ENCODE measurements at regions of chr2 and their contacts with region 1.

Region 1: DNA sequence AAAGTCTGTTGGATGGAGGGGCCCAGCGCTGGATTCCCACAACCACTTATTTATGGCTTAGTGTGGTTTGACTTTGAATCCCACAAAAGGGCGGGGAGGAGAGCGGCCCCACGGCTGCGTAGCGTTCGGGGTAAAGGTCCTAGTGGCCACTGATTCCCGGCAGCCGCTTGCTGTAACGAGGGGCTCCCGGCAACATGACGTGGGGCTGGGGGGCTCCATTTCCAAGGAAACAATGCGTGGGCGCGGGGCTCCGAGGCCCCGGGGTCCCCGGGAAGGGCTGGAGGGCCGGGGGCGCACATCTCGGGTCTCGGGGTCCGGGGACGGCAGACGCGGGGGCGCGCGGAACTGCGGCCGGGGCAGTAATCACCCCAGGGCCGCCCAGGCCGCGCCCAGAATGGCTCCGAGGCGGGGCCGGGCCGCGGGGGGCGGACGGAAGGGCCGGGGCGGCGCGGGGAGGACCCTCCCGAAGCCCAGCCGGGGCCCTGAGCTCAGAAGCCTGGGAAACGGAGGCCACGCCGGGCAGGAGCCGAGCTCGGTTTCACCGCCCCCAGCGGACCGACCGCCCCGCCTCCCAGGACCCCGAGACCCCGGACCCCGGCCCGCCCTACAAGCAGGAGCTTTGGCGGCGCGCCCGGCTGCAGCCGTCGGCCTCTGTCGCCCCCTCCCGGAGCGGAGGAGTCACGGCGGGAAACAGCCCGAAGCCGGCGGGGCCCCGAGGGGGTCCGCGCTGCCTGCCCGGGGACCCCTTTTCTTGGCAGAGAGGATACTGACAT is 11.9 kb upstream of the MLPH start:
- DNase-seq: peak; percentile 67 to 84 (median 78)
- H3K4me3 ChIP-seq: peak overlapping the region in 3 of 4 donors; percentile 13 to 95 (median 93)
- H3K27ac ChIP-seq: peak overlapping the region in 4 of 5 donors; percentile 42 to 87 (median 72)
- H3K4me1 ChIP-seq: peaks cover 9 to 10% of the 10 kb centered on the region in 2 donors
- H3K27me3 ChIP-seq: no peaks in the 10 kb centered on the region
- CTCF ChIP-seq: peak; percentile 51 to 90 (median 73)
- POLR2A ChIP-seq: peak in 1 of 2 donors; percentile 15

Region 2: DNA sequence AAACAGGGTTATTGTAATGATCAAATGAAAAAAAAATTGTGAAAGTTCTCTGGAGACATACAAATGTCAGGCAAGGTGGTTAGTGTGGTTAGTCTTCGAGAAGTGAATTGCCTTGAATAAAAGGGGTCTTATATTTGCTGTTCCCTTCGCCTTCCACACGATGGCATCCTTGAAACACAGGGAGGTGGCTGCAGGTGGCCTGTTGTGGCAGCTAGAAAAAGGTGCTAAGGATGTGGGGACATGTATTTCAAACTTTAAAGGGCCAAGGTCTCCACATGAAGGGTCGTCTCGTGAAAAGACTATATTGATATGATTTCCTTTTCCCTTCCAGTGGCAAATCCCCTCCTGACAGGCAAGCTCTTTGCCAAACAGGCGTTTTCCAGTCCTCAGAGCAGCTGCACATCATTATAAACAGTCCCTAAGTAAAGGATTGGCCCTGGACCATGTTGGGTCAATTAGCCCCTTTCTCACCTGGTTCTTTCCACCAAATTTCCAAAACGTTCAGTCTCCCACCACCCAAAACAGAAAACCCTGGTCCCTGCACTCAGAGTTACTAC is 321.0 kb before region 1 on chr2:
- intact Hi-C with region 1: loop called in 1 of 2 experiments (anchors 10 kb)
- DNase-seq: peak in 5 of 7 donors; percentile 39 to 67 (median 48)
- H3K4me3 ChIP-seq: no peak overlapping the region
- H3K27ac ChIP-seq: no peak overlapping the region
- H3K4me1 ChIP-seq: peaks cover 0 to 3% of the 10 kb centered on the region in 2 donors
- H3K27me3 ChIP-seq: no peaks in the 10 kb centered on the region
- CTCF ChIP-seq: peak; percentile 49 to 76 (median 62)
- POLR2A ChIP-seq: no peak

Region 3: GRCh38 chr2:237413777-237414661 is 61.1 kb before region 1 on chr2 and contains the start of gene COL6A3:
- intact Hi-C with region 1: loop called in 1 of 2 experiments (anchors 5 kb)
- DNase-seq: peak in 4 of 7 donors; percentile 29 to 56 (median 35)
- H3K4me3 ChIP-seq: peak within 1 kb of the TSS in 1 of 4 donors; percentile 7
- H3K27ac ChIP-seq: peak within 1 kb of the TSS in 2 of 5 donors; percentile 61 to 63
- H3K4me1 ChIP-seq: no peaks in the 10 kb centered on the region
- H3K27me3 ChIP-seq: peaks cover 8% of the 10 kb centered on the region
- CTCF ChIP-seq: no peak
- POLR2A ChIP-seq: no peak
- total RNA-seq, gene COL6A3: 17.8 to 69.4 (median 45.3) TPM